ENCODE measurements at regions of chr2 and their contacts with region 1.

Region 1: DNA sequence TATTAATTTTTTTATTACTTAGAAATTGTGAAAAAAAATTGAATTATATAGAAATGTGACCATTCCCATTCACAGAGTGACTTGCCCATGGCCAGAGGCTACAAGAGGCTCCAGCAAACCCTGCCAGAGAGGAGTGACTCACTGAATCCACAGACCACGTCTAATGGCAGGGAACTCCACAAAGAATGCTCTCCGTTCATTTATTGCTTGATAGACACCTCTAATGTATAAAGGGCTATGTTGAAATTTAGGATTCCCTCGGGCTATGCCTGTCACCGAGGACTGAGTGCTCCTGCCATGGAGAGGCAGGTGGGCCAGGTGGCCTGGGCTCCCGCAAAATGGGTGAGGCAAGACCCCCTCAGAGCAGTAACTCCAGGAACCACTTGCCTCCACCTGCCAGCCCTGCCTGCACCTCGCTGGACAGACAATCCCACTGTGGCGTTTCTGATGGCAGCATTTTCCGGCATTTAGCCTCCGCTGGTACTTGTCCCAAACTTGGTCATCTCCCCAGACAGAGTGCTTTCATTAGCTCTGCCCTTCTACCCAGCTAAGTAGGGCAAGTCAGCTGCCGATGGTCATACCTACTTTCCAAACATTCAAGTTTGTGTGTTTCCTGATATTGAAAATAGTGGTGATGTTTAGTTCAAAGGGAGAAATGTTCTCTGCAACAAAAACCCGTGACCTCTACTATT is 200.3 kb downstream of the PRKCE start:
- DNase-seq: no peak
- H3K4me3 ChIP-seq: no peak overlapping the region
- H3K27ac ChIP-seq: no peak overlapping the region
- H3K4me1 ChIP-seq: no peaks in the 10 kb centered on the region
- H3K27me3 ChIP-seq: no peaks in the 10 kb centered on the region
- CTCF ChIP-seq: no peak
- POLR2A ChIP-seq: no peak

Region 2: DNA sequence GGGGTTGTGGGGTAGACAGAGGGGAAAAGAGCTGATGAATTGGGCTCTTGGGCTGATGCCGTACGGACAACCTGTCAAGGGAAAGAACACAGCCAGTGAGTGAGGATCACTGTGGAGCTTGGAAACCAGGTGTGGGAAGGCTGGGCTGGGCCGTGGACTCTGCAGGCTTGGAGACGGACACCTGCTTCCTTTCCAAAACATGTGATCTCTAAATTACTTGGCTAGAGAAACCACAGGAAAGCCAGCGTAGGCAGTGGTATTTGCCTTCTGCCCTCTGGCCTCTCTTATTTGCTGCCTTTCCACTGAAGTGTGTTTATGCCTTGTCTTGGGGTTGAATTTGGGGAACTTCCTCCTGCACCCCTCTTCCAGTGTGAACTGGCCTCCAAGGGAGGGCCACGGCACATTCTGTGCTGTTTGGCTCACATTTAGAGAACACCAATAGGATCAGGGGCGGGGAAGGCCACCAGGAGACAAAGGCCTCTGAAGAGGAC is 67.4 kb after region 1 on chr2:
- intact Hi-C with region 1: loop called (anchors 5 kb)
- DNase-seq: no peak
- H3K4me3 ChIP-seq: no peak overlapping the region
- H3K27ac ChIP-seq: no peak overlapping the region
- H3K4me1 ChIP-seq: no peaks in the 10 kb centered on the region
- H3K27me3 ChIP-seq: no peaks in the 10 kb centered on the region
- CTCF ChIP-seq: no peak
- POLR2A ChIP-seq: no peak

Measured in uterus (tissue), 4 donors.